GM10248 (cell line): ENCODE measurements at regions of chr10 and their contacts with region 1.

Region 1: GRCh38 chr10:9289811-9290210 is 1235.3 kb downstream of the GATA3 start:
- DNase-seq: no peak
- CTCF ChIP-seq: no peak

Region 2: GRCh38 chr10:9274206-9274755 is 15.5 kb before region 1 on chr10:
- CTCF ChIA-PET with region 1: interaction called, 14 read pairs
- POLR2A ChIA-PET with region 1: no interaction called
- DNase-seq: no peak
- CTCF ChIP-seq: no peak